ENCODE measurements at regions of chr22 and their contacts with region 1.

Region 1: DNA sequence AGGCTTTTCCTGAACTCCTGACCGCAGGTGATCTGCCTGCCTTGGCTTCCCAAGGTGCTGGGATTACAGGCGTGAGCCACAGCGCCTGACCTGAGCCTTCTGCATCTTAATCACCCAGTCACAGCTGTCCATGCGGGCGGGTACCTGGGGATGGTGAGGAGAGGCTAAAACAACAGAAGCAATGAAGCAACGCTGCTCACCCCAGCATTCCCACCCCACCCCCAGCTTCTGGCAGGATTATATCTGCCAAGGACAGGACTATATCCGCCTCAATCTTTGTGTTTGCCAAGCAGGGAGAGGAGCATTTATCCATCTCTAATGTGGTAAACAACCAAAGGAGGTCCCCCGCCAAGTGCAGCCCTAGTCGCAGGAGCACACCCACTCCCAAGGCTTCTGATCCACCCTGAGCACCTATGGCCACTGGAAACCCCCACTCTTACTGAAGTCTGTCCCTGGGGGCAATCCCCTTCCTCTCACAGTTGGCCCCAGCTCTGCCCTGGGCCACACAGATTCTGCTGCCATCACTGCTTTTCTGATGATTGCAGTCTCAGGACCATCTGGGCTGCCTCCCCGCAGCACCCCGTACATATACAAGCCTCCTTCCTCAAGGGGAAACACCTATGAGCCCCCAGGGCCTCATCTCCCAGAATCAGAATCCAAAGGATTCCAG is 8.8 kb upstream of the LGALS2 start:
- DNase-seq: no peak
- ATAC-seq: no peak
- H3K4me3 ChIP-seq: no peak overlapping the region
- H3K4me3 Mint-ChIP-seq: no peak overlapping the region
- H3K27ac ChIP-seq: no peak overlapping the region
- H3K27ac Mint-ChIP-seq: no peak overlapping the region
- H3K4me1 ChIP-seq: peaks cover 4 to 9% of the 10 kb centered on the region in 2 donors
- H3K4me1 Mint-ChIP-seq: peaks cover 11% of the 10 kb centered on the region
- H3K27me3 ChIP-seq: peaks cover 0 to 8% (median 0%) of the 10 kb centered on the region in 4 experiments
- H3K27me3 Mint-ChIP-seq: peaks cover 29% of the 10 kb centered on the region
- CTCF ChIP-seq: no peak

Region 2: GRCh38 chr22:37538590-37539357 is 49.9 kb before region 1 on chr22:
- CTCF ChIA-PET with region 1: interaction called, 36 read pairs
- POLR2A ChIA-PET with region 1: interaction called, 6 read pairs
- intact Hi-C with region 1: loop called (anchors 1 kb)
- DNase-seq: peak; percentile 90
- ATAC-seq: peak; percentile 100
- H3K4me3 ChIP-seq: no peak overlapping the region
- H3K4me3 Mint-ChIP-seq: peak overlapping the region; percentile 32
- H3K27ac ChIP-seq: no peak overlapping the region
- H3K27ac Mint-ChIP-seq: peak overlapping the region; percentile 21
- H3K4me1 ChIP-seq: peaks cover 20 to 29% of the 10 kb centered on the region in 2 donors
- H3K4me1 Mint-ChIP-seq: peaks cover 24% of the 10 kb centered on the region
- H3K27me3 ChIP-seq: peaks cover 0 to 6% (median under 1%) of the 10 kb centered on the region in 4 experiments
- H3K27me3 Mint-ChIP-seq: peaks cover 22% of the 10 kb centered on the region
- CTCF ChIP-seq: peak; percentile 98

Region 3: DNA sequence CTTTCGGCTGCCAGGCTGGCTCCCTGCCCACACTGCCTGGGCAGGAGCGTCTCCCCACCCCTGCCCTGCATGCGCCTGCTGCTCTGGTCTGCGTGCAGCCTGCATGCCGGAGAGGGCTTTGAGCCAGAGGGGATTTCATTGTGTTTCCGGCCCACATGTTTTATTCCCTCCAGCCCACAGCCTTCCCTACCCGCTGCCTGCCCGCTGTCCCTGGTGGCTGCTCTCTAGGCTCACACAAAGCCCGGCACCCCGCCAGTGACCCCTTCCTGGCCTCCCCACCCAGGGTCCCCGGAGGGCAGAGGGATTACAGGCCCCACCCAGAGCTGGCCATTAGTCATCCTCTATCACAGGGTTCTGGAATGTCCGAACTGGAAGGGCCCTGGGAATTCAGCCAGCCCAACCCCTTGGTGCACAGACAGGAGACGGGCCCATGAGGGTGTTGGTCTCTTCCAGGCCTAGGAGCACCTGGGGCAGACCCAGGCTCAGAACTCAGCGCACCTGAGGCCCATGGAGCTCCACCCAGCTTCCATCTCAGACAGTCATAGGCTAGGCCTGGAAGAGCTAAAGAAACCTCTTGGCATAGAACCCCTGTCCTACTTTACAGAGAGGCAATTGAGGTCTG is 163.9 kb after region 1 on chr22:
- CTCF ChIA-PET with region 1: no interaction called
- POLR2A ChIA-PET with region 1: no interaction called
- intact Hi-C with region 1: no loop called
- DNase-seq: no peak
- ATAC-seq: no peak
- H3K4me3 ChIP-seq: no peak overlapping the region
- H3K4me3 Mint-ChIP-seq: no peak overlapping the region
- H3K27ac ChIP-seq: no peak overlapping the region
- H3K27ac Mint-ChIP-seq: no peak overlapping the region
- H3K4me1 ChIP-seq: peaks cover 2 to 5% of the 10 kb centered on the region in 2 donors
- H3K4me1 Mint-ChIP-seq: peaks cover 12% of the 10 kb centered on the region
- H3K27me3 ChIP-seq: no peaks in the 10 kb centered on the region
- H3K27me3 Mint-ChIP-seq: no peaks in the 10 kb centered on the region
- CTCF ChIP-seq: no peak